Right cardiac atrium (tissue), 5 donors: ENCODE measurements at regions of chr1 and their contacts with region 1.

Region 1: DNA sequence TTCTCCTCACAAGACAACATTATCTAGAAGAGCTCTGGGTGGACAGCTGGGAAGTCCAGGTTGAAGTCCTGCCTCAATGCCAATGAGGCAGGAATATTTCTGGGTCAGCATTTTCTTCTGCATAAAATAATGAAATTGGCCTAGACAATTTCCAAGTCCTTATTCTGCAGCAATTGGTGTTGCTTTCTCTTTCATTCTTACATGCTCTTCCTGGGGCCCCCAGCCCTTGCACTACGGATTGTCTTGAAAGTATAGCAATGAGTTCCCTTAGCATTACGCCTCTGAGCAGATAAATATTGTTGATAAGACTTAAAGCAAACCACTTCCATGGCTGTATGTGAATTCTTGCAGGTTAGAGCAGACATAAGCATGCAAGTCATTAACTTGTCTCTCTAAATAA is 188.5 kb downstream of the TGFBR3 start:
- DNase-seq: peak in 1 of 3 donors; percentile 43
- ATAC-seq: no peak
- H3K4me3 ChIP-seq: no peak overlapping the region
- H3K27ac ChIP-seq: no peak overlapping the region
- H3K4me1 ChIP-seq: peaks cover 20% of the 10 kb centered on the region
- H3K27me3 ChIP-seq: no peaks in the 10 kb centered on the region

Region 2: DNA sequence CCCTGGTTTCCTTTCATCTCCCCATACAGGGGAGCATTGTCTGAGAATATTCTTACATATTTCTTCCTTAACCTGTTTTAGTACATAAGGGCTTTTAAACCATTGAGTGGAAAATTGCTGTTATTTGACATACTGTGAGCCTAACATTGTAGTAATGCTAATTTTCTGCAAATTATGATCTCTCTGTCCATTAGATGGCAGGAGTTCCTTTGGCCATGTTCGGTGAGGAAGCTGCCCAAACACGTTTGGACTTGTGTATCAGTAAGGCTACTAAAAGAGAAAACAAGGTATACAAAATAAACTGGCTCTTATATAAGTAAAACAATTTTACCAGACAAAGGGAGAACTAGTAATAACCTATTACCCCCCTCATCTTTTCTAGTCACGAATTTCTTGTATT is 167.6 kb before region 1 on chr1:
- intact Hi-C with region 1: loop called in 2 of 4 experiments (anchors 10 kb)
- DNase-seq: no peak
- ATAC-seq: no peak
- H3K4me3 ChIP-seq: no peak overlapping the region
- H3K27ac ChIP-seq: no peak overlapping the region
- H3K4me1 ChIP-seq: no peaks in the 10 kb centered on the region
- H3K27me3 ChIP-seq: no peaks in the 10 kb centered on the region

Region 3: DNA sequence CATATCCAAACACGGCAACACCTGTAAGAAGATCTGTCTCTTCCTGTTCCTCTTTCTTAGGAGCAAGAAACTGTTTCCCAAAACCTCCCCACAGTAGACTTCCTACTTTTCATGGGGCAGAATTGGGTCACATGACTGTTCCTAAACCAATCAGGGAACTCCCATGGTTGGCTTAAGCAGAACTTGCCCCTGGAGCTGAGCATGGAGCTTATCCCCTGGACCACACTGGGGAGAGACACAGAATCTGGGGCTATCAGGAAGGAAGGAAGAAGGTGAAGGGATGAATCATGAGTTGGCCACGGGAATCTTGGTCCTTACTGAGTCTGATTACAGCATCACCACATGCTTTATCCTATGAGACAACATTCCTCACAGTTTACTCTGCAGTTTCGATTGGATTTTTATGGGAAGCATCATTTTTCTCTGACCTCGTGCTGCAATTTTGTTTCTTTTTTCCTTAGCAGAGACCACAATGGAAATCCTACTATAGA is 114.9 kb before region 1 on chr1:
- intact Hi-C with region 1: loop called in 1 of 4 experiments (anchors 10 kb)
- DNase-seq: no peak
- ATAC-seq: peak in 1 of 2 donors; percentile 41
- H3K4me3 ChIP-seq: no peak overlapping the region
- H3K27ac ChIP-seq: no peak overlapping the region
- H3K4me1 ChIP-seq: peaks cover 4% of the 10 kb centered on the region
- H3K27me3 ChIP-seq: no peaks in the 10 kb centered on the region

Region 4: GRCh38 chr1:91653183-91653582 is 44.2 kb before region 1 on chr1:
- intact Hi-C with region 1: no loop called
- DNase-seq: no peak
- ATAC-seq: no peak
- H3K4me3 ChIP-seq: no peak overlapping the region
- H3K27ac ChIP-seq: no peak overlapping the region
- H3K4me1 ChIP-seq: peaks cover 7% of the 10 kb centered on the region
- H3K27me3 ChIP-seq: no peaks in the 10 kb centered on the region

Region 5: GRCh38 chr1:91803847-91804545 is 106.6 kb after region 1 on chr1:
- intact Hi-C with region 1: loop called in 1 of 4 experiments (anchors 10 kb)
- DNase-seq: no peak
- ATAC-seq: peak; percentile 7
- H3K4me3 ChIP-seq: no peak overlapping the region
- H3K27ac ChIP-seq: no peak overlapping the region
- H3K4me1 ChIP-seq: peaks cover 25% of the 10 kb centered on the region
- H3K27me3 ChIP-seq: no peaks in the 10 kb centered on the region

Region 6: GRCh38 chr1:91851130-91852010 is 154.0 kb after region 1 on chr1:
- intact Hi-C with region 1: no loop called
- DNase-seq: peak; percentile 96 to 99 (median 97)
- ATAC-seq: peak; percentile 98
- H3K4me3 ChIP-seq: peak overlapping the region; percentile 54
- H3K27ac ChIP-seq: peak overlapping the region; percentile 98
- H3K4me1 ChIP-seq: peaks cover 13% of the 10 kb centered on the region
- H3K27me3 ChIP-seq: no peaks in the 10 kb centered on the region